Activated naive CD8-positive, alpha-beta T cell treated with anti-CD3 and anti-CD28 coated beads, Interleukin-2, amount 10 ng/mL, durations not matched to agents 7 days and 5 days (primary cell): ENCODE measurements at regions of chr19 and their contacts with region 1.

Region 1: GRCh38 chr19:36850559-36851442 is at the start of gene ZNF345:
- DNase-seq: peak; percentile 80
- ATAC-seq: peak; percentile 80
- H3K4me3 Mint-ChIP-seq: no peak within 1 kb of the TSS
- H3K27ac Mint-ChIP-seq: no peak within 1 kb of the TSS
- H3K4me1 Mint-ChIP-seq: peaks cover 6% of the 10 kb centered on the region
- H3K27me3 Mint-ChIP-seq: no peaks in the 10 kb centered on the region
- total RNA-seq, gene ZNF345: 10.0 to 11.0 TPM

Region 2: GRCh38 chr19:36819130-36819630 is 31.6 kb before region 1 on chr19:
- POLR2A ChIA-PET with region 1: no interaction called
- DNase-seq: no peak
- ATAC-seq: no peak
- H3K4me3 Mint-ChIP-seq: no peak overlapping the region
- H3K27ac Mint-ChIP-seq: no peak overlapping the region
- H3K4me1 Mint-ChIP-seq: no peaks in the 10 kb centered on the region
- H3K27me3 Mint-ChIP-seq: no peaks in the 10 kb centered on the region

Region 3: DNA sequence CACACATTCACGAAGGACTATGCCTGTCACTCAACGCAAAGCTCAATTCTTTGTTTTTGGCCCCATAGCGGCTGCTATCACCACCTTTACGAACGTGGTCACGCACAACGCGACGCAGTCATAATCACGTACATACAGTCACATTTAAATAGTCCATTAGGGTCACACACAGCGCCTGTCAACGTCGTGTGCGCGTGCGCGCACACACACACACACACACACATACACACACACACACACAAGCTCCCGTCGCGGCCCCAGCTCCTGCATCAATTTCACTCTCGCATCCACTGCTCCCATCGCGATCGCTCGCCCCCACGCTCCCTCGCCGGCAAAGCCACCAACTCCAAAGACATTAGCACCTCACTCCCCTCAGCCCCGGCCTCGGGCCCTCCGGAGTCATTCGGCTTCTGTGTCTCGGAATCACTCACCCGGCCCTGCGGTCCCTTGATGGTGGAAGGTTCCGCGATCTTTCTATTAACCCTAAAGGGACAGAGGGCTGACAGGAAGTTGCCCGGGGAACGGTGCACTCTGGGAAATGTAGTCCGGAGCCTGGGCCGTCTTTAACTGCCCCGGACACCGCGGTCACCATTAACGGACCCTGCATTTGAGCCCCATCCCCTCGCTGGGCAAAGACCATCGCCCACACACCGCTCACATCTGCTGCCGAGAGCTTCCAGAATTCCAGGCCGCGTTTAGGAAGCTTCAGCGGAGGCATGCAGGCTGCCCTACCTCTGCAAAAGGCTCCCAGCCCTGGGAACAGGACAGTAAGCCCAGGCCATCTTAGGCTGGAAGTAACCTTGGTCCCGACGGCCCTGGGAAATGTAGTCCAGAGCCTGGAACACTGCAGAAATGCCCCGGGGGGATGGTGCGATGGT is 12.7 kb before region 1 on chr19 and contains the start of gene ZNF790:
- POLR2A ChIA-PET with region 1: interaction called, 75 read pairs
- DNase-seq: peak; percentile 82
- ATAC-seq: peak; percentile 90
- H3K4me3 Mint-ChIP-seq: no peak within 1 kb of the TSS
- H3K27ac Mint-ChIP-seq: peak within 1 kb of the TSS; percentile 57
- H3K4me1 Mint-ChIP-seq: peaks cover 2% of the 10 kb centered on the region
- H3K27me3 Mint-ChIP-seq: no peaks in the 10 kb centered on the region
- total RNA-seq, gene ZNF790: 13.9 to 16.2 TPM

Region 4: GRCh38 chr19:37077934-37078725 is 227.3 kb after region 1 on chr19 and contains the start of gene ZNF420:
- POLR2A ChIA-PET with region 1: interaction called, 14 read pairs
- DNase-seq: peak; percentile 88
- ATAC-seq: peak; percentile 95
- H3K4me3 Mint-ChIP-seq: peak within 1 kb of the TSS; percentile 88
- H3K27ac Mint-ChIP-seq: peak within 1 kb of the TSS; percentile 87
- H3K4me1 Mint-ChIP-seq: peaks cover 16% of the 10 kb centered on the region
- H3K27me3 Mint-ChIP-seq: no peaks in the 10 kb centered on the region
- total RNA-seq, gene ZNF420: 12.7 to 17.1 TPM